ENCODE measurements at regions of chr16 and their contacts with region 1.

Region 1: DNA sequence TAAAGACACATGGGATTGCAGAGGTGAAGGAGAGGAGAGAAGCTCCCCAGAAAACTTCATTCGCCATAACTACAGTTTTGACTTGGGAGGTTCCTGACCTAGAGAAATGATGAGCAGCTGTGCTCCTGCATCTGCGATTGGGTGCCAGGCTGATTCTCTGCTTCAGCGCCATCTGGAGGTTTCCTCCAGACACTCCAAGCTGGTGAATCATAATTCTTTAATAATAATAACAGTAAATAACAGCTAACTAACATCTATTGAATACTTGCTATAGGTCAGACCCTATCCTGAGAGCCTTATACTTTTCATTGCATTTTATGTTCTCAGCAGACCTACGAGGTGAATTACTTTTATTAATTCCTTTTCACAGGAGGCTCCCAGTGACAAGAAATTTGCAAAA is 575.8 kb downstream of the TOX3 start:
- DNase-seq: no peak
- H3K4me3 ChIP-seq: no peak overlapping the region
- H3K27ac ChIP-seq: no peak overlapping the region
- H3K4me1 ChIP-seq: peaks cover 0 to 8% (median under 1%) of the 10 kb centered on the region in 4 experiments; a peak in 2 of 7 replicates
- H3K27me3 ChIP-seq: no peaks in the 10 kb centered on the region
- CTCF ChIP-seq: peak; percentile 49 to 66 (median 60)
- EP300 ChIP-seq: no peak
- POLR2A ChIP-seq: no peak
- RAD21 ChIP-seq: peak; percentile 79 to 82

Region 2: DNA sequence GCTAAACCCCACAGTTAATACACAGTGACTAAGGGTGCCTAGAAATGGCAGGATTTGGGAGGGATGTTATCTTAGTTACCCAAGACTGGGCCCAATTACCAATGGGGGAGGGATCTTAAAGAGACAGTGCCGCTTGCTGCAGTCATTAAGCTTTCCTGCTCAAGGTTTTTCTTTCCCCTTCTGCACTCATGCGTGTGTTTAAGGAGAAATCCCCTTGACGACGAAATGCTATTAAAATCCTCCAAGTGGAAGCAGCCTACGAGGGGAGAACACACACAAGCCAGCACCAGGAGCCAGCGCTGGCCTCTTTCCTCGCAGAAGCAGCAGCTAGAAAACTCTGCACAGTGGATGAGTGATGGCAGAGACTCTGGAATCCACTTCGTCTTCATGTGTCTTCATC is 842.1 kb before region 1 on chr16:
- CTCF ChIA-PET with region 1: no interaction called
- POLR2A ChIA-PET with region 1: no interaction called
- DNase-seq: peak in 1 of 2 experiments; percentile 35
- H3K4me3 ChIP-seq: no peak overlapping the region
- H3K27ac ChIP-seq: no peak overlapping the region
- H3K4me1 ChIP-seq: peaks cover 1 to 6% (median 5%) of the 10 kb centered on the region in 4 experiments; a peak in 5 of 7 replicates
- H3K27me3 ChIP-seq: no peaks in the 10 kb centered on the region; a peak in 1 of 7 replicates
- CTCF ChIP-seq: no peak
- EP300 ChIP-seq: no peak
- POLR2A ChIP-seq: no peak
- RAD21 ChIP-seq: no peak

Region 3: GRCh38 chr16:51834133-51834532 is 137.1 kb before region 1 on chr16:
- CTCF ChIA-PET with region 1: interaction called, 14 read pairs
- POLR2A ChIA-PET with region 1: no interaction called
- DNase-seq: no peak
- H3K4me3 ChIP-seq: no peak overlapping the region
- H3K27ac ChIP-seq: no peak overlapping the region
- H3K4me1 ChIP-seq: 0 out of 7 replicates have a peak, but pooled peaks cover 0 to 2% (median 0%) of the 10 kb centered on the region in 4 experiments
- H3K27me3 ChIP-seq: no peaks in the 10 kb centered on the region
- CTCF ChIP-seq: no peak
- EP300 ChIP-seq: no peak
- POLR2A ChIP-seq: no peak
- RAD21 ChIP-seq: no peak

Region 4: DNA sequence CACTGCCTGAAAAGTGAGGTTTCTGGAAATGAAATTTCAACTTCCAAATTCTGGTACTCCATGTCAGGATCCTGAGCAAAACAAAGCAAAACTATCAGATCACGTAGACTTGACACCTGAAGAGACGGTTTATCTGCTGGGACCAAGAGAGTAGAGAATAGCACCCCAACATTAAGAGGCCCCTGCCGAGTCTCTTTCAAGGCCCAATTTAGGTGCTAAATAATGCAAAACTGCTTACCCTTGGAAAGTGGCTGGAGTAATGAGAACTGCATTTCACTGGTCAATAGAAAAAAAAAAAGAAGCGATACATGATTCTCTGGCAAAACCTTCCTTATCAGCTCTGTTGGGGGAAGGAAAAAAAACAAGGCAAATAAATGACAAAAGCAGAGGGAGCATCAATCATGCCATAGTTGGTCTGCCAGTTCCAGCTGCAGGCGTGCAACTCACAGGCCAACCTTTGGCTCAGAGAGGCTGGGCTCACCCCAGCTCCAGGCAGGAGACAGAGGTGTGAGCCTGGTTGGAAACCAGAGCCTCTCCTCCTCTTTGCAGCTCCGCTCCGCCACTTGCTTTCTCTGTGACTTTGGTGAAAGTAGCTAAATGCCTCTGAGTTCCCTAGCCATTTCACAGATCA is 19.4 kb before region 1 on chr16:
- CTCF ChIA-PET with region 1: interaction called, 10 read pairs
- POLR2A ChIA-PET with region 1: interaction called, 4 read pairs
- DNase-seq: peak; percentile 27 to 57
- H3K4me3 ChIP-seq: peak overlapping the region in 1 of 4 experiments; percentile 24; a peak in 2 of 8 replicates
- H3K27ac ChIP-seq: no peak overlapping the region
- H3K4me1 ChIP-seq: peaks cover 7 to 25% (median 16%) of the 10 kb centered on the region in 4 experiments; a peak in 6 of 7 replicates
- H3K27me3 ChIP-seq: no peaks in the 10 kb centered on the region
- CTCF ChIP-seq: no peak
- EP300 ChIP-seq: no peak
- POLR2A ChIP-seq: no peak
- RAD21 ChIP-seq: no peak

Region 5: GRCh38 chr16:51982715-51983680 is 11.8 kb after region 1 on chr16:
- CTCF ChIA-PET with region 1: interaction called, 22 read pairs
- POLR2A ChIA-PET with region 1: no interaction called
- DNase-seq: peak in 1 of 2 experiments; percentile 52
- H3K4me3 ChIP-seq: no peak overlapping the region
- H3K27ac ChIP-seq: no peak overlapping the region
- H3K4me1 ChIP-seq: no peaks in the 10 kb centered on the region
- H3K27me3 ChIP-seq: no peaks in the 10 kb centered on the region
- CTCF ChIP-seq: peak in 2 of 3 experiments; percentile 72; a peak in 3 of 4 replicates
- EP300 ChIP-seq: no peak
- POLR2A ChIP-seq: no peak
- RAD21 ChIP-seq: peak; percentile 95 to 98